Activated CD4-positive, alpha-beta T cell treated with anti-CD3 and anti-CD28 coated beads, Interleukin-2, amount 10 ng/mL, durations not matched to agents 24 days and 14 days (primary cell): ENCODE measurements at regions of chr22 and their contacts with region 1.

Region 1: DNA sequence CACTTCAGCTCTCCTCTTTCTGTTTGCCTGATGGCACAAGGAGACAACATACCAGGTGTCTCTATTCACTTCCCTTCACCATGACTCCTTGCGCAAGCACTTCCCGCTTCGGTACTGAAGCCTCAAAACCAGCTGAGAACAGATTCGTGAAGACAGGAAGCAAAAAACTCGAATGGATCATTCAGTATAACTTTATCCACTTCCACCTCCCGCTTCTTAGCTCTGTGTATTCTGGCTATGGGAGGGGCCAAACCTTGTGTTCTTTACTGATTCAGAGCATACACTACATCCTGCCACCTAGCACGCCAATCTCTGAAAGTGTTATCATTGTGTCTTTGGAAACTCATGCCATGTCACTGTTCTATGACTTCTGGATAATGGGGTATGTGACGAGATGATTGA is 62.2 kb upstream of the ADA2 start:
- DNase-seq: peak; percentile 86
- H3K4me3 Mint-ChIP-seq: peak overlapping the region; percentile 69
- H3K27ac Mint-ChIP-seq: peak overlapping the region; percentile 95
- H3K4me1 Mint-ChIP-seq: peaks cover 32% of the 10 kb centered on the region
- H3K27me3 Mint-ChIP-seq: peaks cover 14% of the 10 kb centered on the region

Region 2: GRCh38 chr22:17121227-17122195 is 159.9 kb before region 1 on chr22 and contains the start of gene TMEM121B:
- intact Hi-C with region 1: no loop called
- DNase-seq: peak; percentile 73
- H3K4me3 Mint-ChIP-seq: peak within 1 kb of the TSS; percentile 79
- H3K27ac Mint-ChIP-seq: no peak within 1 kb of the TSS
- H3K4me1 Mint-ChIP-seq: peaks cover 32% of the 10 kb centered on the region
- H3K27me3 Mint-ChIP-seq: peaks cover 27% of the 10 kb centered on the region
- total RNA-seq, gene TMEM121B: 0.16 and 0.17 TPM in 2 replicates

Region 3: DNA sequence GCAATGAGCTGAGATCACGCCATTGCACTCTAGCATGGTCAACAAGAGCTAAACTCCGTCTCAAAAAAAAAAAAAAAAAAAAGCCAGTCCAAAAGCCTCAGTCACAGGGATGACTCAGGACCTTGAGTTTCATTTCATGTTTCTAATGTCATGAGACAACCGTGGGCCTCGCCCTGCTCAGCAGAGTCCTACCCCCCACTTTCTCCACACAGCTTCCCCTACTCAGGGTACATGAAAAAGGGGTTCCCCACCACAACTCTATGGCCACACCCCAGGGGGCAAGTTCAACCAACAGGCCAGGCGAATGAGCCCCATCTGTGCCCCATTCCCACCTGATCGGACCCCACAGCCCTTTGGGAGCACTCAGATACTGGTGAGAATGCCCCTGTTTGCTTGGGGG is 37.9 kb before region 1 on chr22:
- intact Hi-C with region 1: loop called (anchors 2 kb)
- DNase-seq: peak; percentile 79
- H3K4me3 Mint-ChIP-seq: no peak overlapping the region
- H3K27ac Mint-ChIP-seq: peak overlapping the region; percentile 87
- H3K4me1 Mint-ChIP-seq: peaks cover 24% of the 10 kb centered on the region
- H3K27me3 Mint-ChIP-seq: peaks cover 2% of the 10 kb centered on the region

Region 4: GRCh38 chr22:17258015-17258787 is 23.2 kb before region 1 on chr22:
- intact Hi-C with region 1: loop called (anchors 1 kb)
- DNase-seq: peak; percentile 92
- H3K4me3 Mint-ChIP-seq: peak overlapping the region; percentile 66
- H3K27ac Mint-ChIP-seq: peak overlapping the region; percentile 49
- H3K4me1 Mint-ChIP-seq: peaks cover 30% of the 10 kb centered on the region
- H3K27me3 Mint-ChIP-seq: peaks cover 1% of the 10 kb centered on the region

Region 5: GRCh38 chr22:17303840-17304779 is 22.7 kb after region 1 on chr22:
- intact Hi-C with region 1: loop called (anchors 1 kb)
- DNase-seq: peak; percentile 94
- H3K4me3 Mint-ChIP-seq: peak overlapping the region; percentile 75
- H3K27ac Mint-ChIP-seq: peak overlapping the region; percentile 90
- H3K4me1 Mint-ChIP-seq: peaks cover 41% of the 10 kb centered on the region
- H3K27me3 Mint-ChIP-seq: no peaks in the 10 kb centered on the region

Region 6: DNA sequence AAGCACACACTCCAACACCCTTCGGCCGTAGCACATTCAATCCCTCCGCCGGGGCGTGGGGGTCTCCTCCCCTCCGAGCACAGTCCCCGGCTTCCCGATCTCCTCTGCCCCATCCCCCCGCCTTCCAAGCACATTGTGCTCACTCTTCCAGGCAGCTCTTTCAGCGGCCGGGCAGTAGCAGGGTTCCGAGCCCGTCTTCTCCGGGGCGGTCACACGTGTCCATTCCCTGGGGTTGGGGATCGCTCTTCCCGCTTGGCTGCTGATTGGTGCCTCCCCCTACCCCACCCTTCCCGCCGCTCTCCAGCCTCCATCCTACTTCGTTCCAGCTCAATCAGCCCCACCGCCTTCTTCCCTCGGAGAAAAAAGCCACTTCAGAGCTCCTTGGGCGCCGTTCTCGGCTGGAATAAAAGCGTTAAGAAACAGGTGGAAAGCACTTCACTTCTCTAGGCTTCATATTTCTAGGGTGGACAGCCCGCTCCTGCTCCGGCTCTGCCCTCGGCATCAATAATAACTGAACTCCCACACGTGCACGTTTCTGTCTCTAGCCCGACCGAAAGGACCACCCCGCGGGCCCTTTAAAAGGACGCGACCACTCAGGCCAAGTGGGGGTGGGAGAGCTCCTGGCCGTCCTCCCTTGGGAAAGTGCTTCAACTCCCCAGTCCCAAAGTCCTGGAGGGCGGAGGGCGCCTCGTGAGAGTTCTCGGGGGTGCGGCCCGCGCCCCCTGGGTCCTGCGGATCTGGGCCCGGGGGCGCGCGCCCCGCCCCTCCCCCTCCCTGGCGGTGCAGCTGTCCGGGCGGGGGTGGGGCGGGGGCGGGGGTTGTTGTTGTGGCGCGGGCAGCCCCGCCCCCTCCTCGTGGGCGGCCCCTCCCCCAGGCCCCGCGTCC is 87.4 kb after region 1 on chr22:
- intact Hi-C with region 1: loop called (anchors 5 kb)
- DNase-seq: peak; percentile 68
- H3K4me3 Mint-ChIP-seq: peak overlapping the region; percentile 81
- H3K27ac Mint-ChIP-seq: peak overlapping the region; percentile 11
- H3K4me1 Mint-ChIP-seq: peaks cover 21% of the 10 kb centered on the region
- H3K27me3 Mint-ChIP-seq: peaks cover 61% of the 10 kb centered on the region

Region 7: DNA sequence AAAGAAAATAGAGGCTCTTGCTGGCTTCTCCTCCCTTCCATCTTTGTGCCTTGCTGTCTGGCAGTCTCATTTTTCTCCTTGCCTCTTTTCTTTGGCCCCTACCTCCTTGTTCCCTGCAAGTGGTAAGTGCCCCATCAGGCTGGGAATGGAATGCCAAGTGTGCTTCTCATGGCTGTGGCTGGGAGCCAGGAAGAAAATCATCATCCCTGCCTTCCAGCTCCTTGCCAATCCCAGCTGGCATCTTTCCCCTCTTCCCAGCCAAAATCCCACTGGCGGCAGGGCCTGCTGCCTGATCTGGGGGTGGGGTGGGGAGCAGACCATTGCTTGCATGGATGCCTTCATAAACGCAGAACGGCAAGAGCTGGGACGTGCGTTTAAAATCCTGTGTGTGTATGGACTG is 254.8 kb after region 1 on chr22:
- intact Hi-C with region 1: no loop called
- DNase-seq: no peak
- H3K4me3 Mint-ChIP-seq: no peak overlapping the region
- H3K27ac Mint-ChIP-seq: no peak overlapping the region
- H3K4me1 Mint-ChIP-seq: no peaks in the 10 kb centered on the region
- H3K27me3 Mint-ChIP-seq: peaks cover 3% of the 10 kb centered on the region